ENCODE measurements at regions of chr6 and their contacts with region 1.

Region 1: DNA sequence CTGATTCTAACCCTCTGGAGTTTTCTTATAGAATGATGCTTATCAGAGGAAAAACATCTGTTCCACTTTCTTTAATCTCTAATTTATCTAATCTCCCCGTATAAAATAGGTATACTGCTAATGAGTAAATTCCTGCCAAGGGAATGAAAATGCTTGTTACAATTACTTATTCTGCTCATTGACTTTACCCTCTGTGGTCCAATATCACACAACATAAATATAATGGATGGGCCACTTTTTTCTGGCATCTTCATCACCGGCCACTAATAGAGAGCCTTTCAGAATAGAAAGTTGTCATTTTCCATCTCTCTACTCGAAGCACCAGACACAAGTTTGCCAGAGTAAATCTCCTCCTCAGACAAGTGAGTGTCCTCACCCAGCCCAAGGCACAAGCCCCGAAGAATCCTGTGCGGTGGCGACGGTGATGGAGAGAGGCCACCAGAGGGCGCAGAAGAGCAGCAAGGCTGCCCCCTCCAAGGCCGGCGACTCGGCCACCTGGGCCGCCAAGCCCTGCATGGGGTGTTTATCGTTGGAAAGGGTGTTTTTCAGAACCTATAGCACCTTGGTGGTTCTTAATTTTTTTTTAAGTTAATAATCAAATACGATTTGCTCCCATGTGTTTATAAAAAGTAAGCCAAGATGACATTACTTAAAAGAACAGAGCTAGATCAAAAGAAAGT is 212.9 kb upstream of the ARID1B start:
- DNase-seq: no peak
- H3K4me3 ChIP-seq: peak overlapping the region in 1 of 4 donors; percentile 0
- H3K27ac ChIP-seq: peak overlapping the region in 2 of 4 donors; percentile 22 to 42
- H3K4me1 ChIP-seq: peaks cover 8 to 14% (median 13%) of the 10 kb centered on the region in 4 donors
- H3K27me3 ChIP-seq: no peaks in the 10 kb centered on the region
- CTCF ChIP-seq: peak; percentile 87 to 97 (median 90)
- EP300 ChIP-seq: no peak
- POLR2A ChIP-seq: no peak

Region 2: GRCh38 chr6:156167625-156168071 is 396.6 kb before region 1 on chr6:
- intact Hi-C with region 1: no loop called
- DNase-seq: no peak
- H3K4me3 ChIP-seq: peak overlapping the region; percentile 44 to 56 (median 47)
- H3K27ac ChIP-seq: peak overlapping the region; percentile 74 to 81 (median 77)
- H3K4me1 ChIP-seq: peaks cover 11 to 38% (median 36%) of the 10 kb centered on the region in 4 donors
- H3K27me3 ChIP-seq: no peaks in the 10 kb centered on the region
- CTCF ChIP-seq: no peak
- EP300 ChIP-seq: no peak
- POLR2A ChIP-seq: no peak

Region 3: DNA sequence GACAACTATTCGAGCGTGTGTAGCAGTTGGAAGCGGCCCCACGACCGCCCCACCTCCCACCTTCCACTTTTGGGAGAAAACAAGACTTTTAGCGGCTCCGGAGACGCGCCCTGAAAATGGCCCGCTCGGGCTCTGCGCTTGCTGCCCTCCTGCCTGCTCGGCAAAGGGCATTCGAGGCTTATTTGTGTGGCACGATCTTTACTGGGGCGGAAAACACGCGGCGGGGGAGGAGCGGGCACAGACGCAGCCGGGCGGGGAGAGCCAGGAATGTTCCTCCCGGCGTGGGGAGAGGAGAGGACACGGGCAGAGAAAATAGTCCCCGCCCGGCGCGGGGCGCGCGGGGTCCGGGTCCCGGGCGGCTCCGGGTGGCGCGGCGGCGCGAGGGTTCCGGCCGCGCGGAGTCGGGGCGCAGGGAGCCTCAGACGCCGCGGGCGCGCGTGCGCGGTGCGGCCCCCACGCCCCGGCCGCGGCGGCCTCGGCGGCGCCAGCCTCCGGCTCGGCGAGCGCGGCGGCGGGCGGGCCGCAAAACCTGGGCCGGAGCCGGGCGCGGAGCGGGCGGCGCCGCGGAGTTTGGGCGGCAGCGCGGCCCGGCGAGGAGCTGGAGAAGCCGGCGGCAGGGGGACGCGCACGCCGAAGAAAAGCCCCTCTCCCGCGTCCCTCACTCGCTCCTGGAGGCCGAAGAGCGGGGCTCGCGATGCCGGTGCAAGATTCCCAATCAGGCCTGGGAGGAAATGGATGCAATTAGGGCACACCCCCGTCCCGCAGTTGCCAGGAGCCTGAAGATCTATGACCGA is 122.9 kb after region 1 on chr6:
- intact Hi-C with region 1: loop called (anchors 2 kb)
- DNase-seq: peak; percentile 98
- H3K4me3 ChIP-seq: peak overlapping the region; percentile 63 to 81 (median 76)
- H3K27ac ChIP-seq: peak overlapping the region; percentile 93 to 99 (median 97)
- H3K4me1 ChIP-seq: peaks cover 0 to 21% (median 18%) of the 10 kb centered on the region in 4 donors
- H3K27me3 ChIP-seq: no peaks in the 10 kb centered on the region
- CTCF ChIP-seq: no peak
- EP300 ChIP-seq: peak; percentile 14
- POLR2A ChIP-seq: peak; percentile 78

Region 4: DNA sequence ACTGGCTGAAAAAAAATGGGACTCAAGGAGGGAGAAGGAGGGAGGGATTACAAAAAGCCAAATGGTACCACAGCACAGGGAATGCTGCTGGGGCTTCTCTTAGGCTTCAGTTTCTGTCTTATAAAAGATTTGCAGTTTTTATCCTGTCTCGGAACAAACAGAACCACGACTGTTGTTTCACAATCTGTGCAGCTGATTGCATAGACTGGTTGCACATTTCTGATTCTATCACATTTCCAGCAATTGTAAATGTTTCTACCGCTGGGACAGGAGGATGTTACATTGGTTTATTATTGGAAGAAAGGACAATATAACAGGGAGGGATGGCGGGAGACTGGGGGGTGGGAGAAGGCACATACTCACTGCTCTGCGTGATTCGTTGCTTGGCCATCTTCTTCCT is 139.5 kb after region 1 on chr6:
- intact Hi-C with region 1: no loop called
- DNase-seq: no peak
- H3K4me3 ChIP-seq: no peak overlapping the region
- H3K27ac ChIP-seq: no peak overlapping the region
- H3K4me1 ChIP-seq: no peaks in the 10 kb centered on the region
- H3K27me3 ChIP-seq: peaks cover 0 to 3% (median 0%) of the 10 kb centered on the region in 4 donors
- CTCF ChIP-seq: no peak
- EP300 ChIP-seq: no peak
- POLR2A ChIP-seq: no peak

Region 5: DNA sequence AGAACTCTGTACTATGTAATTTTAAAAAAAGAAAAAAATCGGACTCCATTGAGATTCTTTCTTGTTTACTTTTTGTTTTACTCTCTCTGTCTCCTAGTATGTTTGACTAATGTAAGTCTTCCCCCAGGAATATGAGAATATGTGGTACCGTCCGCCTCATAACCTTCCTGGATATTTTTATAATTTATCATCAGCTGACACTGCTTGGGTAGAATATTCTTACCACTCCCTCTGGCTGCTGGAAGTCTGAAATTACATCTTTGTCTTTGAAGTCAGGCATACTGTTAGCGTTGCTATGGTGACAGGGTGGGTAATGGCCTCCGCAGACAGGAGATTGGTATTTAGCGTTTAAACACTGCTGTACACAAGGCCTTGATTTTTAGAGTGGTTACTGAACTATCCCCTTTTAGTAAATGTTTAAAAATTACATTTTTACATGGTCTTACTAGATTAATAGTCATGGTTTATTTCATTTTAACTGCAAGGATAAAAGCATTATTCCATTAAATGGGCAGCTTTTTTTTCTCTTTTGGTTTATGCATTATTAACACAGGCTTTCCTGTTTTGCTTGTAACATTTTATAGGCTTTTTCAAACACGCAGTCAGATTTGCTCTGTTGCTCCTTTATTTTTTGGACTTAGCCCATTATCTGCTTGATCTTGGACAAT is 389.3 kb after region 1 on chr6:
- intact Hi-C with region 1: loop called (anchors 10 kb)
- DNase-seq: no peak
- H3K4me3 ChIP-seq: peak overlapping the region in 1 of 4 donors; percentile 11
- H3K27ac ChIP-seq: peak overlapping the region in 3 of 4 donors; percentile 2 to 34 (median 20)
- H3K4me1 ChIP-seq: peaks cover 63 to 88% (median 80%) of the 10 kb centered on the region in 4 donors
- H3K27me3 ChIP-seq: no peaks in the 10 kb centered on the region
- CTCF ChIP-seq: peak; percentile 44 to 60 (median 57)
- EP300 ChIP-seq: no peak
- POLR2A ChIP-seq: no peak

Region 6: GRCh38 chr6:157021344-157021992 is 457.2 kb after region 1 on chr6:
- intact Hi-C with region 1: loop called (anchors 10 kb)
- DNase-seq: peak; percentile 96
- H3K4me3 ChIP-seq: peak overlapping the region; percentile 74 to 93 (median 80)
- H3K27ac ChIP-seq: peak overlapping the region; percentile 96 to 100 (median 98)
- H3K4me1 ChIP-seq: peaks cover 26 to 59% (median 41%) of the 10 kb centered on the region in 4 donors
- H3K27me3 ChIP-seq: no peaks in the 10 kb centered on the region
- CTCF ChIP-seq: peak; percentile 27 to 56 (median 28)
- EP300 ChIP-seq: no peak
- POLR2A ChIP-seq: peak; percentile 95

Region 7: DNA sequence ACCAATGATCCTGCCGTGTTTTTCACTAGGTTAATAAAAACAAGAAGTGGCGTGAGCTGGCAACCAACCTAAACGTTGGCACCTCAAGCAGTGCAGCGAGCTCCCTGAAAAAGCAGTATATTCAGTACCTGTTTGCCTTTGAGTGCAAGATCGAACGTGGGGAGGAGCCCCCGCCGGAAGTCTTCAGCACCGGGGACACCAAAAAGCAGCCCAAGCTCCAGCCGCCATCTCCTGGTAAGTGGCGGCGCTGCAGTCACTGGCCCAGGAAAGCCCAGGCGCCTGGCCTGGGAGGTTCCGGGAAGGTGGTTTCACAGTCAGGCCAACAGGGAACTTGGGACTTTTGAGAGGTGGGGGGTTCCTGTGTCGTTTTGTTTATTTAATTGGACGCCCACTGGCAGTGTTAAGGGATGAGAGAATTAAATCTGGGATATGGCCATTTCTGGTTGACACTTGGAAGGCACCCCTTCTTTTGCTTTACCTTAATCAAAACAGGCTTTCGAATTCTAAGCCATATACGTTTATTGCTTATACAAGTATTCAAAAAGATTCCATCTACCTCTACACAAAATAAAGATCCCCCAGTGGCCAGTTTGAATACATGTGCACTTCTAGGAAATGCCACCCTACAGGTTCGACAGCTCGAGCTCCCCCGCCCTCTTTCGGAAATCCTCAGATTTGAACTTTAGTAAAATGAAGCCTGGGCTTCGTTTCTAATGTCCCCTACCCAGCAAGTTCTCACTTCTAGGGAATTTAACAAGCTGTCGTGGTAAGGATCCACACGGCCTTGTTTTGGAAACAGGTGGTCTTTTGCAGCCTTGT is 620.1 kb after region 1 on chr6:
- intact Hi-C with region 1: loop called (anchors 1 kb)
- DNase-seq: no peak
- H3K4me3 ChIP-seq: peak overlapping the region; percentile 10 to 32 (median 23)
- H3K27ac ChIP-seq: peak overlapping the region in 3 of 4 donors; percentile 7 to 54 (median 28)
- H3K4me1 ChIP-seq: peaks cover 6 to 35% (median 33%) of the 10 kb centered on the region in 4 donors
- H3K27me3 ChIP-seq: no peaks in the 10 kb centered on the region
- CTCF ChIP-seq: peak; percentile 93 to 99 (median 93)
- EP300 ChIP-seq: no peak
- POLR2A ChIP-seq: no peak

Region 8: DNA sequence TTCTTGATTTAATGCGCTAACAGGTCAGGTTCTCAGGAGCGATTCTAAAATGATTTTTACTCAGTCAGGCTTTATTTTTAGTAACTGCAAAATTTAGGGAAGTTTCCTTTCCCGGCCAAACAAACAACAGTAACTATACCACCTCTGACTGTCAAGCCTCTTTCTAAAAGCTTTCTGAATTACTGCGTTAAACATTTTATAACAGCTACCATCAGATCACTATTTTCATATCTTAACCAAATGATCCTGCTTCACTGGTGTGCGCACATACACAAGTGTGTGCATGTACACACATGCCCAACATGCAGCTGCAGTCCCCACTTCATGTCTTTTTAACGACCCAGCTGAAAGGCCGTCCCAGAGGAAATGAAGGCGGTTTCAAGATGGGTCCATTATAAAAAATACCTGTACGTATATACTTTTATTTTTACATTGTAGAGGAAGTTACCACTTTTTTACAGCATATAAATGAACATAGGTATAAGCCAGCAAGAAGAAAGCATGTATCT is 734.0 kb after region 1 on chr6:
- intact Hi-C with region 1: loop called (anchors 10 kb)
- DNase-seq: no peak
- H3K4me3 ChIP-seq: no peak overlapping the region
- H3K27ac ChIP-seq: no peak overlapping the region
- H3K4me1 ChIP-seq: peaks cover 0 to 6% (median 5%) of the 10 kb centered on the region in 4 donors
- H3K27me3 ChIP-seq: no peaks in the 10 kb centered on the region
- CTCF ChIP-seq: no peak
- EP300 ChIP-seq: no peak
- POLR2A ChIP-seq: no peak